Common myeloid progenitor, CD34-positive (primary cell): ENCODE measurements at regions of chr22 and their contacts with region 1.

Region 1: GRCh38 chr22:23754980-23755636 is 883 bp upstream of the VPREB3 start:
- DNase-seq: no peak
- H3K4me3 ChIP-seq: no peak overlapping the region
- H3K27ac ChIP-seq: no peak overlapping the region
- H3K4me1 ChIP-seq: peaks cover 0 to 45% (median 34%) of the 10 kb centered on the region in 4 experiments
- H3K27me3 ChIP-seq: no peaks in the 10 kb centered on the region

Region 2: DNA sequence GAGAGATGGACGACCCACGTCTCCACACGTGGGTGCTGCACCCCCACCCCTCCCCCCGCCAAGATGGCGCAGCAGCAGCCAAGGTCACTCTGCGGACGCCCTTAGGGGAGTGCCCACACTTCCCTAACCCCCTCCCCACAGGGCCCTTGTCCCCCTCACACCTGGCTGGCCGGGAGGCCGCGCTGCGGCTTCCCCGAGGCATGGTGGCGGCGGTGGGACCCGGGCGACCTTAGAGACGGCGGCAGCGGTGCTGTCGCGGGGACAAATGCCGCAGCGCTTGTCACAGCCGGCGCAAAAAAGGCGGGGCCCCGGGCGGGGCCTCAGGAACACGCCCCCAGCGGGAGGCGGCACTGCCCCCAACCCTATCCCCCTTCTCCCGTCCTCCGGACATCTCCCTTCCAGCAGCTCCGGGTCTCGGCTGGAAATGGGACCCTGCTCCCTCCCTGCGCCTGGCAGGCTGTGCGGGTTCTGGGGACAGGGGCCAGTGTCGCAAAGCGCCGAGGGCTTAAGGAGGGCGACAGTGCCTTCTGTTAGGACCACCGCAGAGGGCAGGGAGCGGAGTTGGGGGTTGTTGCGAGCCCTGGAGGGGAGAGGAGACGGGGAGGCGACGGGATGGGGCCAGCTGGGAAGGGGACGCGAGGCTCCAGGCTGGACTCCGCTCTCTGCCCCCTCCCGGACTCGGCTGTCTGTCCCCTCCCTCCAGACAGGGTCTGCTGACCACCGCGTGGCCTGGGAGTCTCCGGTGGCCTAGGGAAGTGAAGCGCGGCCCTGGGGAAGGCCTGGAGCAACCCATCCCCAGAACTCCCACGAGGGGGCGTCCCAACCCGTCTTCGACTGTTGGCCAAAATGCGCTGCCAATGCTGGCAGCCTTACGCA is 12.8 kb after region 1 on chr22 and contains the start of gene CHCHD10:
- CTCF ChIA-PET with region 1: interaction called, 36 read pairs
- POLR2A ChIA-PET with region 1: no interaction called
- DNase-seq: peak; percentile 77 to 88 (median 85)
- H3K4me3 ChIP-seq: peak within 1 kb of the TSS; percentile 72 to 92 (median 83)
- H3K27ac ChIP-seq: peak within 1 kb of the TSS in 1 of 2 experiments; percentile 75
- H3K4me1 ChIP-seq: peaks cover 6 to 74% (median 66%) of the 10 kb centered on the region in 4 experiments
- H3K27me3 ChIP-seq: peaks cover 0 to 1% (median 0%) of the 10 kb centered on the region in 5 experiments

Region 3: GRCh38 chr22:23816156-23816976 is 61.3 kb after region 1 on chr22:
- CTCF ChIA-PET with region 1: no interaction called
- POLR2A ChIA-PET with region 1: no interaction called
- DNase-seq: no peak
- H3K4me3 ChIP-seq: no peak overlapping the region
- H3K27ac ChIP-seq: no peak overlapping the region
- H3K4me1 ChIP-seq: peaks cover 0 to 10% (median 0%) of the 10 kb centered on the region in 4 experiments
- H3K27me3 ChIP-seq: no peaks in the 10 kb centered on the region